Right ventricle myocardium superior (tissue), 1 donor: ENCODE measurements at regions of chr4 and their contacts with region 1.

Region 1: GRCh38 chr4:52721968-52722815 is 29.0 kb downstream of the ERVMER34-1 start:
- DNase-seq: peak; percentile 94
- ATAC-seq: peak; percentile 98

Region 2: DNA sequence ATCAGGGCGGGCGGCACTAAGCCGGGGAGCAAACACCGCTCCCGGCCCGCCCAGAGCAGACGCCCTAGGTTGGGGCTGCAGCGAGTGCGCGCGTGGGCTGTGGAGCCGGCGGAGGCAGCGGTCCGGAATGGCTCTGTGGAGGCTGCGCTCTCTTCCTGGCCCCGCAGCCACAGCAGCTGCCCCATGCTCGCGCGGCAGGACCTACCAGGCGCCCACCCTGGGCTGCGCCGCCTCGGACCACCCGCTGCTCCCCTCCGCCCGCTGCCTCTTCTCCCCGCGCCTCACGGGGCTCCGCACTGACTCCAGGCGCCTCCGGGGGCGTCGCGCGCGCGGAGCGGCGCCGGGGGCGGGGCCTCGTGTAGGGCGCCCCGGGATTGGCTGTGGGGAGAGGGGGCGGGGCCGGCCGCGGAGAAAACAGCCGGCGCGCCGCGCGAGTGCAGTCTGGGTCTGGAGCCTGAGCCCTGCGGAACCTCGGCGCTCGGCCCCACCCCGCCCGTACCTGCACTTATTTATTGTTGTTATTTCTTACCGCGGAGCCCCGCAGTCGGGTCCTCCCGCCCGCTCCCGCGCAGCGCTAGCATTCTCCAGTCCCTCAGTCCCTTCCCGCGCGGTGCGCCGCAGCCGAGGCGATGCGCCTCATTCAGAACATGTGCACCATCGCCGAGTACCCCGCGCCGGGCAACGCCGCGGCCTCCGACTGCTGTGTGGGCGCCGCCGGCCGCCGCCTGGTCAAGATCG is 139.9 kb after region 1 on chr4 and contains the start of gene RASL11B:
- intact Hi-C with region 1: loop called (anchors 5 kb)
- DNase-seq: peak; percentile 91
- ATAC-seq: peak; percentile 99
- total RNA-seq, gene RASL11B: 5.4 TPM